Ascending aorta (tissue), 2 donors: ENCODE measurements at regions of chr9 and their contacts with region 1.

Region 1: DNA sequence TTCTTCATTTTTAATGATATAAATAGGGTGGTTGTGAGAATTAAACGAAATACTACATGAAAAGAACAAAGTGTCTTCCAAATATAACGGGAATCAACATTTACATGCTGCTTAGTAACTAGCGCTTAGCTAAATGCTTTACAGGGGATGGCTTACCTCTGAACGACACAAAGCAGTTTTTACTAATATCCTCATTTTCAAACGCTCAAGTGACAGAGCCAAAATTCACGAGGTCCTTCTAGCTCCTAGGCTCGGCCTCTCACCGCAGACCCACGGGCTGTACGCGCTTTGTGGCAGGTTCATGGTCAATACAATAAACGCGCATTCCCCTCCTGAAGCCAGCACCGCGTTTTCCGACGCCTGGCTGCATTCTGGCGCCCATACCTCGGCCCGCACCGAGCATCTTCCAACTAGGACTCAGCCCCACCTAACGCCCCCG is 442 bp downstream of the ZNF510 start:
- DNase-seq: no peak
- H3K4me3 ChIP-seq: peak overlapping the region; percentile 73 to 85
- H3K27ac ChIP-seq: peak overlapping the region; percentile 70 to 80
- H3K4me1 ChIP-seq: peaks cover 0 to 4% of the 10 kb centered on the region in 2 donors
- H3K27me3 ChIP-seq: no peaks in the 10 kb centered on the region
- CTCF ChIP-seq: no peak

Region 2: GRCh38 chr9:96327694-96328352 is 449.6 kb before region 1 on chr9:
- intact Hi-C with region 1: loop called (anchors 5 kb)
- DNase-seq: peak in 1 of 2 donors; percentile 71
- H3K4me3 ChIP-seq: no peak overlapping the region
- H3K27ac ChIP-seq: no peak overlapping the region
- H3K4me1 ChIP-seq: no peaks in the 10 kb centered on the region
- H3K27me3 ChIP-seq: no peaks in the 10 kb centered on the region
- CTCF ChIP-seq: peak; percentile 76 to 90 (median 86)

Region 3: GRCh38 chr9:96495341-96495740 is 282.1 kb before region 1 on chr9:
- intact Hi-C with region 1: no loop called
- DNase-seq: no peak
- H3K4me3 ChIP-seq: no peak overlapping the region
- H3K27ac ChIP-seq: peak overlapping the region; percentile 20 to 60
- H3K4me1 ChIP-seq: peaks cover 0 to 11% of the 10 kb centered on the region in 2 donors
- H3K27me3 ChIP-seq: no peaks in the 10 kb centered on the region
- CTCF ChIP-seq: no peak

Region 4: DNA sequence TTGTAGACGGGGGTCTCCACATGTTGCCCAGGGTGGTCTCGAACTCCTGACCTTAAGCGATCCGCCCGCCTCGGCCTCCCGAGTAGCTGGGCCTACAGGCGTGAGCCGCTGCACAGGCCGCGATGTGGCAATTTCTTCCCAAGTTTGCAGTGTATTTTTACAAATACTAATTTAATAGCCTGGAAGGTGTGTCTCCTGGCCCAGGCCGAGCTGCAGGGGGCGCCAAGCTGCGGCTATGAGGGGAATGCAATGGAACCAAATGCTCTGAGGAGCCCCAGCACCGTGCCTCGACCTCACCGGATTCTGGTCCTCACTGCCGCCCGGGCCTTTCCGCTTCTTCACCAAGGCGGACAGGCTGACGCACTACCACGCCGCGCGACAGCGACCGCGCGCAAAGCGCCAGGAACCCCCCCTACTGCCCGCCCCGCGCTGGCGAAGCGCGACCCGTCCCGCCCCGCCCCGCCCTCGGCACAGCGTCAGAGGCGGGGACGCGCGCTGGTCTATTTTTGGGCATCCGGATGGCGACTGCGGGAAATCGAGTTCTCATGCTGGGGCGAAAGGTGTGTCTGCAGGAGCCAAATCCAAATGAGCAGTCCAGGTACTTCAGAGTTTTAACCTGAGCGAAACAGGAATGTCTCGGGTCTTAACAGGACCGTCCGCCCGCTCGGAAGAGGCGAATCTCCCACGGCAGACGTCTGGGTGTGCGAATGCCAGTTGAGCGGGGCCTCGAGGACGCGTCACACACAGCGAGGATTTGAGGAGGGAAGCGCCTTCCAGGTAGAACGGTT is 90.7 kb before region 1 on chr9:
- intact Hi-C with region 1: loop called (anchors 2 kb)
- DNase-seq: peak; percentile 37 to 91
- H3K4me3 ChIP-seq: peak overlapping the region; percentile 62 to 74
- H3K27ac ChIP-seq: peak overlapping the region; percentile 63 to 79
- H3K4me1 ChIP-seq: peaks cover 0 to 5% of the 10 kb centered on the region in 2 donors
- H3K27me3 ChIP-seq: no peaks in the 10 kb centered on the region
- CTCF ChIP-seq: peak; percentile 23 to 52 (median 47)